ENCODE measurements at regions of chr5 and their contacts with region 1.

Region 1: DNA sequence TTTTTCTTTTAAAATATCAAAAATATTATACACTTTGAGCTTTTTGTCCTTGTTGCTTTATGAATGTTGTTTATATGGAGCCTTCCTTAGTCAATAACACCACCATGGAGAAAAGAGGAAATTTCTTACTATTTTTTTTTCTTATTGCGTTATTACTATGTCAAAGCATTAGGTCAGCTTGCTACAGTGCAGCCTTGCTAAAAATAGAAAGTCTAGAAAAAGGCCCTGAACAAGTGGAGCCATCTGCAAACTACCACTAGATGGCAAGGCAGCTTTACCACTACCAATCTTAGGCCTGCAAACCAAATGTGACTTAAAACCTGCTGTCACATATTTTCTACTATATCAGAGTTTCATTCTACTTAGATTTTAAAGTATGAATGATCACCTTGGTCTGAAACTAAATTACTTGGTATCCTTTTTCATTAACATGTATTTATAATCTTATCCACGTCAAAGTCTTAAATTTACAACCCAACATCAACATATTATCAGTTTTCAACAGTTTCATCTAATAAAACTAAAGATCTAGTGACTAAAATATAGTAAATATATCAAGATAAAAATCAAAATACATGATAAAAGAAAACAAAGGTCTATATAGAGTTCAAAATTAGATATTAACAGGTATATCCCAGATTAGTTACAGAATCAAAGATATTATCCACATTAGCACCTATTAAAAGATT is 113.1 kb upstream of the ACOT12 start:
- DNase-seq: peak; percentile 12 to 83
- H3K4me3 ChIP-seq: no peak overlapping the region
- H3K27ac ChIP-seq: peak overlapping the region; percentile 45 to 67
- H3K4me1 ChIP-seq: peaks cover 0 to 11% of the 10 kb centered on the region in 2 donors
- H3K27me3 ChIP-seq: no peaks in the 10 kb centered on the region
- CTCF ChIP-seq: peak; percentile 78 to 85 (median 82)

Region 2: GRCh38 chr5:81425569-81425968 is 81.5 kb before region 1 on chr5:
- intact Hi-C with region 1: loop called (anchors 2 kb)
- DNase-seq: no peak
- H3K4me3 ChIP-seq: no peak overlapping the region
- H3K27ac ChIP-seq: peak overlapping the region; percentile 22 to 51
- H3K4me1 ChIP-seq: peaks cover 0 to 6% of the 10 kb centered on the region in 2 donors
- H3K27me3 ChIP-seq: no peaks in the 10 kb centered on the region
- CTCF ChIP-seq: peak; percentile 41 to 62 (median 54)

Region 3: DNA sequence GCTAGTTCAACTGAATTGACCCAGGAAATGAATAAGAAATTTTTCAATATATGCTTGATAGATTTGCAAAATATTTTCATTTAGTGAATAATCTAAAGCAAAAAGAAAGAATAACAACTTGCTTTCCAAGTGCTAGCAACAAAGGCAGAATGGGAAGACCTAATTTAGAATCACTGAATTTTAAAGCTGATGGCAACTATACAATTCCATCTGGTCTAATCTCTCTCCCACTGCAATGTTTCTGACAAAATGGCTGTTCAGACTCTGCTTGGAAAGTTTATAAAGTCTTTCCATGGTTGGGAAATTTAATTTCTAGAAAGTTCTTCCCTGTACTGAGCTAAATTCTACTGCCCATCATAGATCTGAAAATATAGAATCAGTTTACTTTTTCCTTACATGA is 37.4 kb before region 1 on chr5:
- intact Hi-C with region 1: no loop called
- DNase-seq: no peak
- H3K4me3 ChIP-seq: no peak overlapping the region
- H3K27ac ChIP-seq: no peak overlapping the region
- H3K4me1 ChIP-seq: no peaks in the 10 kb centered on the region
- H3K27me3 ChIP-seq: no peaks in the 10 kb centered on the region
- CTCF ChIP-seq: no peak

Region 4: DNA sequence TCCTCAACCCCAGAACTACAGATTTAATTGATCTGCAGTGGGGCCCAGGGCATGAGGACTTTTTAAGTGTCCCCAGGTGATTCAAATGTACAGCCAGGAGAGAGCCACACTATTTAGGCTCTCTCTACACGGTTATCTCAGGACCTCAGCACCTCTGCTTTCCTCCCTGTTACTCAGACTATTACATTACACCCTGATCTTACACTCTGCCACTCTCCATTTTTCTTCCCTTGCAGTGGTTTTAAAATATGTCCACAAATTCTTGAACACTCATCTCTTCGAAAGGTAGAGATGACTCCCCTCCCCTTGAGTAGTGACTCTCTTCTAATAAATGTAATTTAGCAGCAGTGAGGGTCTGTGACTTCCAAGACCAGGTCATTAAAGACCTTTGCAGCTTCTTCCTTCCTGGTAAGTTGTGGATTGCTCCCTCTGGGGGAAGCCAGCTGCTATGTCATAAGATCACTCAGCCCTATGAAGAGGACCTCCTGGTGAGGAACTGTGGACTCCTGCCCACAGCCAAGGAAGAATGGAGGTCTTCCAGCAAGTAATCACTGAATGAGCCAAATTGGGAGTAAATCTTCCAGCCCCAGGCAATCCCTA is 331.4 kb after region 1 on chr5:
- intact Hi-C with region 1: loop called (anchors 5 kb)
- DNase-seq: no peak
- H3K4me3 ChIP-seq: no peak overlapping the region
- H3K27ac ChIP-seq: no peak overlapping the region
- H3K4me1 ChIP-seq: no peaks in the 10 kb centered on the region
- H3K27me3 ChIP-seq: no peaks in the 10 kb centered on the region
- CTCF ChIP-seq: peak in 2 of 3 experiments; percentile 21 to 39

Region 5: GRCh38 chr5:81971712-81972495 is 464.9 kb after region 1 on chr5 and contains the start of gene ATG10:
- intact Hi-C with region 1: loop called (anchors 5 kb)
- DNase-seq: peak; percentile 58 to 94
- H3K4me3 ChIP-seq: peak within 1 kb of the TSS; percentile 81 to 85
- H3K27ac ChIP-seq: peak within 1 kb of the TSS; percentile 96 to 100
- H3K4me1 ChIP-seq: no peaks in the 10 kb centered on the region
- H3K27me3 ChIP-seq: no peaks in the 10 kb centered on the region
- CTCF ChIP-seq: no peak
- total RNA-seq, gene ATG10: 8.4 TPM